ENCODE measurements at regions of chr13 and their contacts with region 1.

Region 1: DNA sequence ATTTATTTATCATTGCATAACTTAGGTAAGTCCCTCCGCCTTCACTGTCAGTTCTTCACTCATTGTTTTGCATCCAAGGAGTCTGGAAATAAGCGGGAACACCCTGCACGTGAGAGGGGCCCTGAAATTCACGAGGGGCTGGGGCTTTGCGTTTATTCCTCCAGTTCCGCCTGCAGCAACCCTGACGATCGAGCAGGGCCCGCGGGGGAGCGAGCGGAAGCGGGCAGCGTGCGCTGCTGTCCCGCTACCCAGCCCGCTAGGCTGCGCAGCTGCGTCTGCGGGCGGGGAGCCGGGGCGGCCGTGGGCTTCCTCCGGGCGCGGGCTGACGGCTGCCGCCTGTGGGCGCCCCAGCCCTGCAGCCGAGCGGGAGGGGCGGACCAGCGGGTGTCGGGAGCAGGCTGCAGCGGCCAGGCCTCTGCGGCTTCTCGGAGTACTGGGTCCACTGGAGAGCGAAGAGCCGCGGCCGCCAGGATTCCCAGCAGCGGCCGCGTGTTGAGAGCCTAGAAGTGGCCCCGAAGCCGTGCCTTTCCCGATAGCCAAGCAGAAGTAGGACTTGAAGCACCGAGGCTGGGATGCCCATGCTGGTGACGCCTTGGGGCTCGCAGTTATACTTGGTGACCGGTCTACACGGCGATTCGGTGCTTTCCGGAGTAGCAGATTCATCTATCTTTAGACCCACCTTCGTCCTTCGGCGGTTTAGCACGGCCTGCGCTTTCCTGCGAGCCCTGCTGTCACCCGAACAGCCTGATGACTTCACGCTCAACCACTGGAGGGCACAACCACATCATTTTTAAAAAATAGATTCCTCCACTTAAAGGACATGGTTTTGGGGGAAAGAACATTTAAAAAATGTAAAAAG is 32.9 kb upstream of the SACS start:
- DNase-seq: peak; percentile 78
- ATAC-seq: peak; percentile 92
- H3K4me3 Mint-ChIP-seq: peak overlapping the region; percentile 54
- H3K27ac Mint-ChIP-seq: no peak overlapping the region
- H3K4me1 Mint-ChIP-seq: peaks cover 12% of the 10 kb centered on the region
- H3K27me3 Mint-ChIP-seq: peaks cover 5% of the 10 kb centered on the region

Region 2: DNA sequence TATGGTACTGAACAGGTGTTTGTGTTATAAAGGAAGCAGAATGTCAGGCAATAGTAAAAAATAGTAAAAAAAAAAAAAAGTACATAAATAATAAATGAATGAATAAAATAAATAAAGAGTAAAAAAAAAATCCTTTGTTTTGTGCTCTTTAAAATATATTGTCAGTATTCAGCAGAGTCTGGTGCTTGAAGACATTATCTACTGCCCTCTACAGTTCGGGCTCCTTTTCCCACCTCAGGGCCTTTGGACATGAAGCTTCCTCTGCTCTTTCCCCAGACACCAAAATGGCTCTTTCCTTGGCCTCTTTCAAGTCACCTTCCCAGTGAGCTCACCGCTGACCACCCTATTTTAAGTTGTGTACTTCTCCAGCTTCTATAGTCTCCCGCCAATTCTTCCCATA is 241.3 kb after region 1 on chr13:
- CTCF ChIA-PET with region 1: no interaction called
- POLR2A ChIA-PET with region 1: no interaction called
- intact Hi-C with region 1: loop called in 1 of 2 experiments (anchors 5 kb)
- DNase-seq: peak; percentile 20
- ATAC-seq: no peak
- H3K4me3 Mint-ChIP-seq: no peak overlapping the region
- H3K27ac Mint-ChIP-seq: no peak overlapping the region
- H3K4me1 Mint-ChIP-seq: no peaks in the 10 kb centered on the region
- H3K27me3 Mint-ChIP-seq: no peaks in the 10 kb centered on the region

Region 3: DNA sequence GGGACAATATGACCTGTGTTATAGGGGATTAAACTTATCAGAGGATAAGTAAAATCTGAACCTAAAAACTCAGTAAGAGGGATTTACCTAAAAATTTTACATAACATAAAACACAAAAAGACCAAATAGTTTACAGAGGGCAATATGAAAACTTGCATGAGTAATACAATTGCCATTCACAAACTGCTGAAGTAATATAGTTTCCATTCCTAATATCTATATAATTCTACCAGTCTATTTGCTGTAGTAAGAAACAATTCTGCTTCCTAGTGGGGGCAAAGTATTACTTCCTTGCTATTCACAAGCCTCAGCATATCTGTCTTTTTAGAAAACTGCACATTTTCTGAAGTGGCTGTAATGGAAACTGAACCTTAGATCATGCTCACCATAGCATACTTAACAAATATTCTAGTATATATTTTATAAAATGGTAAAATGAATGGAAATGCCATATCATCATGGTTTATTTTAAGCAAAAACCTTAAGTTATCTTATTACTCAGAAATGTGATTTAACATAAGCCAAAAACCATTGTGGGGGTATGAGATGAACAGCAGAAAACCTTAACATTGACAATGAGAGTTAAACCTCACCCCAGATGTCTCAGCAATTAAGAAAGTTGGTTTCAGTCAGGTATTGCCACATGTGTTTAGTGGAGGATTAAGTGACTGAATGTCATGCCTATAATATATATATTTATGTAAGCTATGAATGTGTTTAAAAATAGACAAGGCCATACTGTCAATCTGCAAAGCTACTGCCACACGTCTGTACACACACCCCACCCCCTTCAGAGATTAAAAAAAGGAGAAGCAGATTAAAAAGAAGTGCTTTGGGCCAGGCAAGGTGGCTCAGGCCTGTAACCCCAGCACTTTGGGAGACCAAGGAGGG is 286.0 kb after region 1 on chr13:
- CTCF ChIA-PET with region 1: no interaction called
- POLR2A ChIA-PET with region 1: no interaction called
- intact Hi-C with region 1: loop called in 1 of 2 experiments (anchors 5 kb)
- DNase-seq: no peak
- ATAC-seq: peak; percentile 78
- H3K4me3 Mint-ChIP-seq: no peak overlapping the region
- H3K27ac Mint-ChIP-seq: no peak overlapping the region
- H3K4me1 Mint-ChIP-seq: peaks cover 44% of the 10 kb centered on the region
- H3K27me3 Mint-ChIP-seq: peaks cover 3% of the 10 kb centered on the region

Region 4: GRCh38 chr13:23871616-23872220 is 405.3 kb after region 1 on chr13:
- CTCF ChIA-PET with region 1: interaction called, 6 read pairs
- POLR2A ChIA-PET with region 1: no interaction called
- intact Hi-C with region 1: loop called (anchors 1 kb)
- DNase-seq: no peak
- ATAC-seq: no peak
- H3K4me3 Mint-ChIP-seq: no peak overlapping the region
- H3K27ac Mint-ChIP-seq: no peak overlapping the region
- H3K4me1 Mint-ChIP-seq: no peaks in the 10 kb centered on the region
- H3K27me3 Mint-ChIP-seq: no peaks in the 10 kb centered on the region

Region 5: GRCh38 chr13:23888658-23889614 is 422.6 kb after region 1 on chr13 and contains the start of gene MIPEP:
- CTCF ChIA-PET with region 1: no interaction called
- POLR2A ChIA-PET with region 1: no interaction called
- intact Hi-C with region 1: loop called (anchors 5 kb)
- DNase-seq: peak; percentile 94
- ATAC-seq: peak; percentile 90
- H3K4me3 Mint-ChIP-seq: peak within 1 kb of the TSS; percentile 79
- H3K27ac Mint-ChIP-seq: peak within 1 kb of the TSS; percentile 75
- H3K4me1 Mint-ChIP-seq: peaks cover 23% of the 10 kb centered on the region
- H3K27me3 Mint-ChIP-seq: no peaks in the 10 kb centered on the region
- total RNA-seq, gene MIPEP: 13.2 to 15.5 TPM

Region 6: DNA sequence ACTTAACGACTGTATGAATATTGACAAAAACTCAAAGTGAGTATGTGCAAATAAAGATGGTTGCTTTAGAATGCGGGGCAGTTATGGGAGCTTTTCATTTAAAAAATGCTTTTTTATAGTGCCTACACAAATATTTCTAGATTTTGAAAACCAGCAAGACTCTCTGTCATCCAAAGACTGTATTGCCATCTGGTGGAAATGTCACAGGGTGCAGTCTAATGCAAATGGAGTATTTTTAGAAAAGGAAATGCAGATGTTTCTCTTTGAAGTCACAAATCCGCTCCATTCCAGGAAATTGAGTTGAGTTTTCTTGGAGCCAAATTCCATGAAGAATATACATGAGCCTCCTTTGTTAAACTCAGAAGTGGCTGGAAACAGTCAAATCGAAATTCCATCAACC is 433.2 kb after region 1 on chr13:
- CTCF ChIA-PET with region 1: no interaction called
- POLR2A ChIA-PET with region 1: interaction called, 3 read pairs
- intact Hi-C with region 1: loop called in 1 of 2 experiments (anchors 1 kb)
- DNase-seq: peak; percentile 48
- ATAC-seq: peak; percentile 66
- H3K4me3 Mint-ChIP-seq: no peak overlapping the region
- H3K27ac Mint-ChIP-seq: no peak overlapping the region
- H3K4me1 Mint-ChIP-seq: peaks cover 3% of the 10 kb centered on the region
- H3K27me3 Mint-ChIP-seq: peaks cover 22% of the 10 kb centered on the region

Region 7: DNA sequence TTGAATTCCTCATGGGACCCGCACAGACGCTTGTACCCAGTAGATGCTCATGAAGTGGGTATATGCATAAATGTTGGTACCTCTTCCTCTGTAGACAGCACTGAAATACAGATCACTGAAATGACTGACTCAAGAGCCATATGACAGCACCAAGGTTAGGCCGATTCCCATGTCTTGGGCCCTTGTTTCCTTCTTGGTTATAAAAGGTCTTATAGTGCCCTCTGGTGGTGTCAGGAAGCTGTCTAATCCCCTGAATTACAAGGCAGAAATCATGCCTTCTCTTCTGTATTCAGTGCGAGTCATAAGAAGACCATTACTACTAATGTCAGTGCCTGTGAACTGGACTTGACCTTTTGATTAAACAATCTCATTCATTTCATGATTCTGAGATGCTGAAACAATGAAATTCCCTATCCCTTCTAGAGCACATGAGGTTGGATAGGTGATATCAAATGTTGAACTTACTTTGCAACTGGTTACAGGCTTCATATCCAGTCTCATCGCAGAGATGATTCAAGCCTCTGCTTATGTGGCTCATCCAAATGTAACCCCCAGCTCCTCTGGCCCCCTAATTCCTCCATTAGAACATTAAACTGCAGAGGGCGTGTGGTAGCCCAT is 753.8 kb after region 1 on chr13:
- CTCF ChIA-PET with region 1: interaction called, 3 read pairs
- POLR2A ChIA-PET with region 1: no interaction called
- intact Hi-C with region 1: loop called in 1 of 2 experiments (anchors 5 kb)
- DNase-seq: peak; percentile 69
- ATAC-seq: peak; percentile 98
- H3K4me3 Mint-ChIP-seq: no peak overlapping the region
- H3K27ac Mint-ChIP-seq: no peak overlapping the region
- H3K4me1 Mint-ChIP-seq: peaks cover 29% of the 10 kb centered on the region
- H3K27me3 Mint-ChIP-seq: no peaks in the 10 kb centered on the region